Ascending aorta (tissue), 2 donors: ENCODE measurements at regions of chr3 and their contacts with region 1.

Region 1: DNA sequence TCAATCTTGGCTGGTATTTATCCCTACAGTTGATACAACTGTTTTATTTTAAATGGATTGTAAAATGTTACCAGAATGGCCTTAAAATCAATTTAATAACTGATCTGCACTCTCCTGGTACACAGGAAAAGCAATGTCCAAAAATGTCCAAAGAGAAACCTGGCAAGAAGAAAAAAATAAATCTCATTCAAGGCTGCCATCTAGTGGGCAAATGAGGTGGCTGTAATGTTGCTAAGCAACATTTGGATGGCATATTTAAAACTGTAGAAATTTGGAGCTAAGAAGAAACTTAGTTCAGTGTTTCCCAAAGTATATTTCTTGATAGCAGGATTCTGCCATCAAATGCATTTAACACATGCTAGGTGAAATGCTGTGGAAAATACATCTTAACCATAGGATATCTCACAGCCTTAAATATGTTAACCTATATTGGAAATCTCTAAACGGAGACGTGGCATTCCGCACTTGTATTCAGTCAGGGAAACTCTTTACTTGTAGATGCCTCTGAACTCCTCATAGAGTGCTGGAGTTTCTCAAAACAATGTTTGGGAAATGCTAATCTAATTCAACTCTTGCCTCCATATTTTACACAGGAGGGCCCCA is 216.8 kb downstream of the ERC2 start:
- DNase-seq: peak in 1 of 2 donors; percentile 61
- H3K4me3 ChIP-seq: no peak overlapping the region
- H3K27ac ChIP-seq: no peak overlapping the region
- H3K4me1 ChIP-seq: no peaks in the 10 kb centered on the region
- H3K27me3 ChIP-seq: no peaks in the 10 kb centered on the region
- CTCF ChIP-seq: peak; percentile 40 to 86 (median 74)

Region 2: GRCh38 chr3:54427941-54428871 is 1823.2 kb before region 1 on chr3:
- intact Hi-C with region 1: loop called (anchors 10 kb)
- DNase-seq: no peak
- H3K4me3 ChIP-seq: no peak overlapping the region
- H3K27ac ChIP-seq: no peak overlapping the region
- H3K4me1 ChIP-seq: no peaks in the 10 kb centered on the region
- H3K27me3 ChIP-seq: no peaks in the 10 kb centered on the region
- CTCF ChIP-seq: peak; percentile 29 to 91 (median 79)

Region 3: GRCh38 chr3:54853573-54854404 is 1397.7 kb before region 1 on chr3:
- intact Hi-C with region 1: loop called (anchors 5 kb)
- DNase-seq: peak in 1 of 2 donors; percentile 74
- H3K4me3 ChIP-seq: no peak overlapping the region
- H3K27ac ChIP-seq: no peak overlapping the region
- H3K4me1 ChIP-seq: no peaks in the 10 kb centered on the region
- H3K27me3 ChIP-seq: no peaks in the 10 kb centered on the region
- CTCF ChIP-seq: peak; percentile 58 to 85 (median 70)

Region 4: DNA sequence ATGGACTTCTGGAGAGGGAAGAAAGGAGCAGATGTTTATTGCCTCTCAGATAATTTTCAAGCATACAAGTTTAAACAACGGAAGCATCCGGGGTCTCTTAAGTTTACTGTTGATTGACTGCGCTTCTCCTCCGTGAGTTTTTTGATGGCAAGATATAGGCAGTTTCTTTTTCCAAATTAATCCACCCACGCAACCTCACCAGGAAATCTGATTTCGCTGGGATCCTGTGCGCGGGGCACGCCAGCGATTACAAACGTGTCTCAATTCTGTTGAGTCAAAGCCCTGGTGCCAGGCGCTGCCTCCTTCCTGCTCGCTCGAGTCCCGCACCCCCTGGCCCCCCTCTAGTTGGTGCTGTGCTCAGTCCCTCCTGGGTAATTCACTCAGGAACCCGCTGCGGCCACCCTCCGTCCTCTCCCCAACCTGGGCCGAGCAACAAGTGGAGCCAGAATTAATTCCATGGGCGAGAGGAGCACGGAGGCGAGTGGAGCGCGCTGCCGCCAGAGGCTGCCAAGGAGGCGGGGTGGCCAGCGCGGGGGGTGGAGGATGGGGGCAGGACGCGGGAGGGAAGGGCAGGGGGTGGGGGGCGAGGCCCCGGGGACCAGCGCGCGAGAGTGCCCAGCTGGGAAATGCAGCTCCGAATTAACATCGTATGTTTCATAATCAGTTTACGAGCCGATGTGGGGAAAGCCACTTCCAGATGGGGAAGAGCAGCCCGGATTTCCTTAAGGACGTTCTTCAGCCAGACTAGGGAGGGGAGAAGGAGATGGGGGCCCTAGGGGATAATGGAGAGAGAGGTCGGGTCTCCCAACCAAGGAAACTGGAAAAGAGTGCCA is 770.3 kb before region 1 on chr3:
- intact Hi-C with region 1: loop called (anchors 5 kb)
- DNase-seq: no peak
- H3K4me3 ChIP-seq: peak overlapping the region; percentile 39 to 47
- H3K27ac ChIP-seq: no peak overlapping the region
- H3K4me1 ChIP-seq: peaks cover 0 to 9% of the 10 kb centered on the region in 2 donors
- H3K27me3 ChIP-seq: peaks cover 7% of the 10 kb centered on the region
- CTCF ChIP-seq: no peak